Activated naive CD4-positive, alpha-beta T cell treated with anti-CD3 and anti-CD28 coated beads for 36 hours (primary cell): ENCODE measurements at regions of chr1 and their contacts with region 1.

Region 1: DNA sequence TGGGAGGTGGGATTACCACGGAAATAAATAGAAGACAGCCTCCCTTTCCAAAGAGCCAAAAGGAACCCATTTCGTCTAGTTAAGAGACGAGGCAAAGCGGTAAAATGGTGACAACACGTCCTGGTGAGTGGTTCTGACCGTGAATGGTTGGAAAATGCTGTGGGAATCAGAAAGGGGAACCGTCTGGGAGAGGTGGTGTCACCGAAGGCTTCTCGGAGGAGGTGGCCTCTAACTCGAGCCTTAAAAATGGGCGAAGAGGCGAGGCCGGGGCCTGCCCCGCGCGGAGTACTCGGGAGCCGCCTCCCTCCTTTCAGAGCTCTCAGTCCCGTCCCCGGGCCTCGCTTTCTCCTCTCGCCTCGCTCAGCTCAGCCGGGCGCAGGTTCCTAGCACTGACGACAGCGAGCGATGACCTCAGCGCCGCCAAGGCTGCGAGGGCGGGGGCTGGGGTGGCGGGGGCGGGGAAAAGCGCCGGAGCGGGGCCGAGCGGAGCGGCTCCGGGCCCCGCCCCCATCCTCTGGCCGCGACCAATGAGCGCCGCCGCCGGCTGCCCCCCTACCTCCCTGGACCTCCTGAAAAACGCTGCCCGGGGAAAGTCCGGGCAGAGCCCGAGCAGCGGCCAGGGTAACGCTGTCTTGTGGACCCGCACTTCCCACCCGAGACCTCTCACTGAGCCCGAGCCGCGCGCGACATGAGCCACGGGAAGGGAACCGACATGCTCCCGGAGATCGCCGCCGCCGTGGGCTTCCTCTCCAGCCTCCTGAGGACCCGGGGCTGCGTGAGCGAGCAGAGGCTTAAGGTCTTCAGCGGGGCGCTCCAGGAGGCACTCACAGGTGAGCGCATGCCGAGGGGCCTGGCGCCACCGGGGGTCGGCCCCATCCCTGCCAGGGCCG is at the start of gene BTG2:
- DNase-seq: peak; percentile 96
- H3K4me3 Mint-ChIP-seq: peak within 1 kb of the TSS; percentile 97
- H3K27ac Mint-ChIP-seq: peak within 1 kb of the TSS; percentile 99
- H3K4me1 Mint-ChIP-seq: peaks cover 56% of the 10 kb centered on the region
- H3K27me3 Mint-ChIP-seq: no peaks in the 10 kb centered on the region
- total RNA-seq, gene BTG2: 106 to 109 TPM

Region 2: GRCh38 chr1:202957733-202958543 is 347.2 kb before region 1 on chr1 and contains the start of gene ADIPOR1:
- CTCF ChIA-PET with region 1: no interaction called
- intact Hi-C with region 1: loop called (anchors 5 kb)
- DNase-seq: peak; percentile 94
- H3K4me3 Mint-ChIP-seq: peak within 1 kb of the TSS; percentile 85
- H3K27ac Mint-ChIP-seq: peak within 1 kb of the TSS; percentile 37
- H3K4me1 Mint-ChIP-seq: peaks cover 48% of the 10 kb centered on the region
- H3K27me3 Mint-ChIP-seq: no peaks in the 10 kb centered on the region
- total RNA-seq, gene ADIPOR1: 75.5 to 77.0 TPM

Region 3: GRCh38 chr1:203273206-203273868 is 31.8 kb before region 1 on chr1:
- CTCF ChIA-PET with region 1: interaction called, 186 read pairs
- intact Hi-C with region 1: loop called (anchors 1 kb)
- DNase-seq: peak; percentile 96
- H3K4me3 Mint-ChIP-seq: peak overlapping the region; percentile 72
- H3K27ac Mint-ChIP-seq: peak overlapping the region; percentile 83
- H3K4me1 Mint-ChIP-seq: peaks cover 58% of the 10 kb centered on the region
- H3K27me3 Mint-ChIP-seq: no peaks in the 10 kb centered on the region

Region 4: DNA sequence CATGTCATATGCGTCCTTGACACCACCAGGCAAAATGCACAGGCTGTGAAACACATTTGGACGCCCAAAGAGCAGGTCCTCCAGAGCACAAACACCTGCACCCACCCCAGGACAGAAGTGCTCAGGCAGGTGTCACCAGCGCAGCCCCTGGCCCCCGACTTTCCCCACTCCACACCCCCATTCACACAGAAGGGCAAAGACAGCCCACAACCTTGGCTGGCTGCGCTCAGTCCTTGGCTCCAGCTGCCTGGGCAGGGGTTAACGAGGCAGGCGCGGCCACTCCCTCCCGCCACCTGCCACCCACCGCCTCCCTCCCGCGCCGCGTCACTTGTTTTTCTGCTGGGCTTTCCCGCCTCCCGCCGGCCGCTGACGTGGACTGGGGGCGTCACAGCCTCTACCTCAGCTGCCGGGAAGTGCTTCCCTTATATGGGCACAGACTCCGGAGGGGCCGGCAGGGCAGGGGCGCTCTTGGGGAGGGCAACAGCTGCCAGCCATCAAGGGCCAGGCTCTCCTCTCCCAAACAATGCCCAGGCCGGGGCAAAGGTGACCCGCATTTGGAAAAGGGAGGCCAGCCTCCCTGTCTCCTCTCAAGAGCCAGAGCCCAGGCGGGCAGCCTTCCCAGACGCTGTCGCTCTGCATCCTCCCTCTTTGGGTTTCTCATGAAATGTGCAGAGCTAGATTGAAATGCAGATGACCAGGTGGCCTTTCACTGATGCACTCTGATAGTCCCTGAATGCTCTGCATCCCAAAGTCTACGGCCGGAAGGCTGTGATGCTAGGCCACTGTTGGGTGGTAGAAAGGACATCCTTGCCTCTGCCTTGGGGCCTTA is 14.7 kb before region 1 on chr1:
- CTCF ChIA-PET with region 1: interaction called, 39 read pairs
- intact Hi-C with region 1: loop called (anchors 1 kb)
- DNase-seq: peak; percentile 99
- H3K4me3 Mint-ChIP-seq: peak overlapping the region; percentile 83
- H3K27ac Mint-ChIP-seq: peak overlapping the region; percentile 99
- H3K4me1 Mint-ChIP-seq: peaks cover 82% of the 10 kb centered on the region
- H3K27me3 Mint-ChIP-seq: no peaks in the 10 kb centered on the region

Region 5: GRCh38 chr1:203320591-203321272 is 15.6 kb after region 1 on chr1:
- CTCF ChIA-PET with region 1: interaction called, 135 read pairs
- intact Hi-C with region 1: no loop called
- DNase-seq: peak; percentile 84
- H3K4me3 Mint-ChIP-seq: peak overlapping the region; percentile 40
- H3K27ac Mint-ChIP-seq: peak overlapping the region; percentile 88
- H3K4me1 Mint-ChIP-seq: peaks cover 76% of the 10 kb centered on the region
- H3K27me3 Mint-ChIP-seq: no peaks in the 10 kb centered on the region

Region 6: DNA sequence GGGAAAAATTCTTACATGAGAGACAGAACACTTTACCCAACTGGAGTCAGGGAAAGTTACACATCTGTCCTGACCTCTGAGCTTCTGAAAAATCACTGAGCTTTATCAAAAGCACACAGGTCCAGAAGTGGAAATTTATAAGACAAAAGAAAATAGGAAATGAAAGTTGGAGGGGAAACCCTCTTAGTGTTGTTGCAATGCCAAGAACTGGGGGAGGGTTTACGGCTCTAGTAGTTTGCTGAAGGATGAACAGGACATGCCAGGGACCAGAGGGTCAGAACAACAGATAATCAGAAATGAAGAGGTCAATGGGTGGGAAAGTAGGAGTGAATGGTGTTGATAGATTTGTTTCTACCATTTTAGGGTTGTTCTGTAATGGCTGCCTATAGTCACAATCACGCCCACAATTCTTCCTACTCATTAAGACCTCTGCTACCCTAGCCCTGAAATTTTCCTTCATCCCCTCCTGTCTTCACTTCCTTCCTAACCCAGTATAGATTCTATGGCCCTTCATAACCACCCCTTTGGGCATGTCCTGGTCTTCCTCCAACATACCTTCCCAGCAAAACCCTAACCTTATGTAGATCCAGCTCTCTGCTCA is 76.1 kb after region 1 on chr1:
- CTCF ChIA-PET with region 1: no interaction called
- intact Hi-C with region 1: no loop called
- DNase-seq: no peak
- H3K4me3 Mint-ChIP-seq: no peak overlapping the region
- H3K27ac Mint-ChIP-seq: no peak overlapping the region
- H3K4me1 Mint-ChIP-seq: no peaks in the 10 kb centered on the region
- H3K27me3 Mint-ChIP-seq: peaks cover 3% of the 10 kb centered on the region

Region 7: DNA sequence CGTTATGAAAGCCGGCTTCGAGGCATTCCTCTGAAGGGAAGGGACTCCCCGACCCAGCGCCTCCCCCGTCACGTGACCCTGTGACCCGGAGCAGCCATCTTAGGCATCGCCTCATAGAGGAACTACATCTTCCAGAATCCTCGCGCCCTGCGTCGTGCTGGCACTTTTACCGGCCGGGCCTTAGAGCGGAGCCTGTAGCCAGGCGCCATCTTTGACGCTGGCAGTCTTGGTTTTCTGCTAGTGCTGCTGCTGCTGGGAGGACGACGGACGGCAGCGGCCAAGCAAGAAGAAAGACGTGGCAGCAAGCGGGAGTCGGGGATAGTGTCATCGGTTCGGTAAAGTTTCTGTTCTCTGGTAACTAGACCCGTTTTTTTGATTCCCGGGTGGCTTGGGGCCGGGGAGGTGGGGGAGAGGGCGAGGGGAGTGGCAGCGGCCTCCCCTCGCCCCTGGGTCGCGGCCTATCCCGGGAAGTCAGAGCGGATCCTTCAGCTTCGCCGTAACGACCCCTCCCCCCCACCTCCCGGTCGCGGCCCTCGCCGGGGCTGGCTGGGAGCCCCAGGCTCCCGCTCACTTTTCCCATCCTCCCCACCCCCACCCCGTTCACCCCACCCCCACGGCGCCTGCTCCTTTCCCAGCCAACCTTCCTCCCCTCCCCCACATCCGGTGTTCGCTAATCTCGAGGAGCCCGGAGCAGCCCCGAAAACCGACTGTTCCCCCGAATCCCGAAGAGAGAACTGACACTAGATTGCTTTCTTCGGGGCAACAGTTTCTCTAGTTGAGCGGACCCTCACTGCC is 490.5 kb after region 1 on chr1 and contains the starts of genes ZBED6 and ZC3H11A:
- CTCF ChIA-PET with region 1: no interaction called
- intact Hi-C with region 1: loop called (anchors 5 kb)
- DNase-seq: peak; percentile 100
- H3K4me3 Mint-ChIP-seq: peak within 1 kb of the TSS; percentile 96
- H3K27ac Mint-ChIP-seq: peak within 1 kb of the TSS; percentile 98
- H3K4me1 Mint-ChIP-seq: peaks cover 47% of the 10 kb centered on the region
- H3K27me3 Mint-ChIP-seq: no peaks in the 10 kb centered on the region
- total RNA-seq, gene ZBED6: 23.3 to 23.6 TPM
- total RNA-seq, gene ZC3H11A: 78.4 to 80.9 TPM